ENCODE measurements at regions of chr10 and their contacts with region 1.

Region 1: GRCh38 chr10:63465293-63466143 is at the start of gene JMJD1C:
- DNase-seq: peak; percentile 59 to 91
- H3K4me3 ChIP-seq: peak within 1 kb of the TSS; percentile 62 to 84
- H3K27ac ChIP-seq: peak within 1 kb of the TSS; percentile 89 to 95
- H3K4me1 ChIP-seq: peaks cover 0 to 25% (median 1%) of the 10 kb centered on the region in 4 donors
- H3K27me3 ChIP-seq: no peaks in the 10 kb centered on the region
- CTCF ChIP-seq: peak in 1 of 2 experiments; percentile 8

Region 2: DNA sequence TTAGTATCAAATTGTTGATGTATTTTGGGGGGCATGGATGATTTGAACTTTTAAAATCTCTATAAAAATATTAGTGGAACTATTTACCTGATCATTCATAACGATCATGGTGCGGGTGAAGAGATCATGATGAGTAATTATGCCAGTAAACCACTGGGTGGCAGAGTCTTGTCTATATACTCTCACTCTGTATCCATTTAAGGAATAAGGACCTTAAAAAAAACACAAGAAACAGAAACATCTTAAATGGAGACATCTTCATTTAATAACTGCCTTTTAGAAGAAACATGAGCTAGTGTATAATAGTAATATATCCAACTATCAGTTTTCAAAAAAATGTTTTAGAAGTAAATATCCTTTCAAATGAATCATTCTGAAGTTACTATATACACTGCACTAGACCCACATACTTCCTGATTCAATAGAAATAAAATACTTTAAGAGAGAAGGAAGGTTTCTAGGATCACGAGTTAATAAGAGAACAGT is 248.4 kb before region 1 on chr10:
- intact Hi-C with region 1: loop called (anchors 10 kb)
- DNase-seq: no peak
- H3K4me3 ChIP-seq: no peak overlapping the region
- H3K27ac ChIP-seq: no peak overlapping the region
- H3K4me1 ChIP-seq: peaks cover 0 to 16% (median 0%) of the 10 kb centered on the region in 4 donors
- H3K27me3 ChIP-seq: no peaks in the 10 kb centered on the region
- CTCF ChIP-seq: peak; percentile 67 to 77

Region 3: DNA sequence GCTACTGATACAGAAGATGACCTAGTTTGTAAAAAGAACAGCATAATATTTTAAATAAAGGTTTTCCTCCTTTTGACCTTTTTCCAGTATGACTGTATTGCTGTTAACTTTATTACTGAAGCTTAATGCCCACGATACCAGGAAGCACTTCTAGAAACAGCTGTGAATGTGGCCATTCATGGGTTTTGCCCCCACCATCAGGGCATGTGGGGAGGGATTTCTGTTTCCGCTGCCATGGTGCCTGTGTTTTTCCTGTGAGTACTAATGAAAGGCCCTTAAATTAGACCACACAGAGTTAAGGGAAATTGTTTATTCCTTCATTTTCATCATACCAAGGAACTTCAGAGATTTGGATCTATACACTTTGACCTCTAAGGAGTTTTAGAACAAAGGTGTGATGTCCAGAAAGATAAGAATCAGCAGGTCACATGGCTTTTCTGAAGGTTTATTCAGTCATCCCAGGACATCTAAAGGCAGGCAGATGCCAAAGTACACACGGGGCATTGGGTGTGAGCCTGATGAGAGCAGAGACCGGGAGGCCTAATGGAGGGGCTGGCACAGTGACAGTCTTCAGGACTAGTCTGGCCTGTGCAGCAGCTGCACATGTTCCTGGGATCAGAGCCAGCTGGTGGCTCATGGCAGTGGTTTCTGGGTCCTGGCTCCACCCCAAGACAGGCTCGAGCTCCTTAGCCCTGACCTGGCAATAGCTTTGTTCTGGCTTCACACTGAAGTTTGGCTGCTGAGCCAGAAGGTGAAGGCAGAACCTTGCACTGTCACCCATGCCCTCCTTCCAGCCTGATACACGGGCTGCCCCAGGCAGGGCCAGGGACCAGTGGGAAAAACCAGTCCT is 246.6 kb after region 1 on chr10:
- intact Hi-C with region 1: loop called (anchors 10 kb)
- DNase-seq: peak; percentile 94 to 98
- H3K4me3 ChIP-seq: no peak overlapping the region
- H3K27ac ChIP-seq: peak overlapping the region; percentile 68 to 73
- H3K4me1 ChIP-seq: peaks cover 0 to 54% (median 44%) of the 10 kb centered on the region in 4 donors
- H3K27me3 ChIP-seq: no peaks in the 10 kb centered on the region
- CTCF ChIP-seq: no peak